ENCODE measurements at regions of chr6 and their contacts with region 1.

Region 1: DNA sequence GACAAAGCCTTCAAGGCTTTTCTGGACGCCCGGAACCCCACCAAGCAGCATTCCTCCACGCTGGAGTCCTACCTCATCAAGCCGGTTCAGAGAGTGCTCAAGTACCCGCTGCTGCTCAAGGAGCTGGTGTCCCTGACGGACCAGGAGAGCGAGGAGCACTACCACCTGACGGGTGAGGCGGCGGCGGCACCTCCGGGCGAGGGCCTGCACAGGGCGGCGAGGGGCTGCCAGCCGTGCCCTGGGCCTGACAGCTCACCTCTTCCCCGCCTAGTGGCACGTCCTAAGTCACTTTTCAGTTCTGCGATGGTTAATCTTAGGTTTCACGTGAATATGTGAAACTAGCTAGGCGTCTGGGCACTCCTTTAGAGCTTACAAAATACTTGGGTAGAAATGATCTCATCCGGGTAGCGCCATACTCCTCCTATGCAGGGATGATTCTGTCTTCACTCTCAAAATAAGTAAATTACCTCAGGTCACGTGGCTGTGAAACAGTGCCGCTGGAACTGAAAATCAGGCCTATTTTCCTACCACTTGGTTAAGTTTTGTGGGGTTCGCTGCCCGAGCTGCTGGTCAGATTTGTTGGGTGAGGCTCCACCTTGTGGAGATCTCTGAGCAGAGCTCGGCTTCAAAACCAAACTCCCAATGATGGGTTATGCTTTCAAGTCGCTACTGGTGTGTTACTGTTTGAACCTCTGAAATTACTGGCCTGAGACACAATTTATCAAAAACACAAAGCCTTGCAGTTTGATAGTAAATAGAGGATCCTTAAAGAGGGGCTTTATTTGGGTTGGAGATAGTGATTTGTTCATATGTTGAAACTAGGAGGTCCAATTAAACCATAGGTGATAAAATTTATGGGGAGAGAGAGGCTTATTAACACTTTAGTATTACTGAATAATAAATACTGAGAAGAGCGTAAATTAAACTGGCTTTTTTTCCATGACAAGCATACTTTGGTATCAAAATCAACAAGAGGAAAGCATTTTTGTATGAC is 15.5 kb upstream of the CLDN20 start:
- DNase-seq: peak; percentile 42
- H3K4me3 ChIP-seq: no peak overlapping the region
- H3K27ac ChIP-seq: peak overlapping the region in 3 of 4 donors; percentile 3 to 69 (median 20)
- H3K4me1 ChIP-seq: no peaks in the 10 kb centered on the region
- H3K27me3 ChIP-seq: no peaks in the 10 kb centered on the region
- CTCF ChIP-seq: peak; percentile 55 to 63 (median 59)
- EP300 ChIP-seq: no peak
- POLR2A ChIP-seq: no peak

Region 2: DNA sequence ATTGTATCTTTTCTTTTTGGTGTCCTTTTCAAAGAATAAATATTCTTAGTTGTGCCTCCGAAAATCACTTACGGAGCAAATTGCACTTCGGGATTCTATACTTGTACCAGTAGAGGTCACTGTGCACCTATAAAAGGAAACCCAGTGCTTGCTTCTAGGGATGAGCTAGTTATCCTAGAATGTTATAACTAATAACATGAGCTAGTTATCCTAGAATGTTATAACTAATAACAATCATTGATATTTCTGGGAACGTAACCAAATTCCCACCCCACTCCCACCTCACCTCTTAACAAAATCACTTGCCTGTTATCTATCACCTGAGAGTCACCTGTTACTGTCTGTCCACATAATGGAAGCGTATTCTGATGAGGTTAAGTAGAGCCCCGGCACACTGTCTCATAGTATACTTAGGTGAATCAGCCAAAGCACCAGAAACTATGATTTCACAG is 380.1 kb before region 1 on chr6:
- in situ Hi-C with region 1: no loop called
- intact Hi-C with region 1: loop called (anchors 5 kb)
- DNase-seq: no peak
- H3K4me3 ChIP-seq: no peak overlapping the region
- H3K27ac ChIP-seq: no peak overlapping the region
- H3K4me1 ChIP-seq: peaks cover 0 to 16% (median 4%) of the 10 kb centered on the region in 4 donors
- H3K27me3 ChIP-seq: no peaks in the 10 kb centered on the region
- CTCF ChIP-seq: peak; percentile 49 to 69 (median 61)
- EP300 ChIP-seq: no peak
- POLR2A ChIP-seq: no peak

Region 3: GRCh38 chr6:154928325-154928922 is 319.9 kb before region 1 on chr6:
- in situ Hi-C with region 1: loop called in 2 of 4 experiments (anchors 10 to 25 kb)
- intact Hi-C with region 1: loop called (anchors 10 kb)
- DNase-seq: peak; percentile 58
- H3K4me3 ChIP-seq: no peak overlapping the region
- H3K27ac ChIP-seq: no peak overlapping the region
- H3K4me1 ChIP-seq: peaks cover 0 to 11% (median 0%) of the 10 kb centered on the region in 4 donors
- H3K27me3 ChIP-seq: no peaks in the 10 kb centered on the region
- CTCF ChIP-seq: peak; percentile 68 to 76 (median 73)
- EP300 ChIP-seq: no peak
- POLR2A ChIP-seq: no peak

Region 4: GRCh38 chr6:155188707-155189496 is 59.4 kb before region 1 on chr6:
- in situ Hi-C with region 1: loop called in 1 of 4 experiments (anchors 10 kb)
- intact Hi-C with region 1: no loop called
- DNase-seq: no peak
- H3K4me3 ChIP-seq: peak overlapping the region in 1 of 4 donors; percentile 8
- H3K27ac ChIP-seq: peak overlapping the region; percentile 62 to 73 (median 67)
- H3K4me1 ChIP-seq: peaks cover 0 to 53% (median 20%) of the 10 kb centered on the region in 4 donors
- H3K27me3 ChIP-seq: no peaks in the 10 kb centered on the region
- CTCF ChIP-seq: no peak
- EP300 ChIP-seq: no peak
- POLR2A ChIP-seq: no peak